SK-N-SH (cell line): ENCODE measurements at regions of chr7 and their contacts with region 1.

Region 1: GRCh38 chr7:100407285-100408180 is 21.0 kb downstream of the ZCWPW1 start:
- DNase-seq: peak; percentile 75
- H3K4me3 ChIP-seq: no peak overlapping the region
- H3K27ac ChIP-seq: no peak overlapping the region
- H3K4me1 ChIP-seq: no peaks in the 10 kb centered on the region
- H3K27me3 ChIP-seq: no peaks in the 10 kb centered on the region
- CTCF ChIP-seq: peak; percentile 90
- EP300 ChIP-seq: no peak
- RAD21 ChIP-seq: peak; percentile 81

Region 2: DNA sequence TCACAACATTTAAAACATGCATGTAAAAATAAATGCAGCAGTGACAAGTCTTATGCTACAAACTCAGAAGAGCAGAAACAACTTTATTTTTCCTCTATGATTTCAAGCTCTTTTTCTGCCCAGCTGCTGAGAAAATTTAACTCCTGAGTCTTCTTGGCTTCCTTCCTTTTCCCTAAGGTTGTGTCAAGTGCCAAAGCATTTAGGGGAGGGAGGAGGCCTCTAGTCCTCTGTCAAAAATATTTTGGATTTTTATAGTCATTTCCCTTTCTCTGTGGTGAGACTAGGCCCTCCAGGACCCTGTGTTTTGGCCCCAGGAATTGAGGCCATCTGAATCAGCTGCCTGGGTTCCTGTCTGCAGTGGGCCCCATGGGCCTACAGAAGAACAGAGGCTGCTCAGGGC is 60.6 kb before region 1 on chr7:
- CTCF ChIA-PET with region 1: interaction called, 11 read pairs
- POLR2A ChIA-PET with region 1: no interaction called
- DNase-seq: no peak
- H3K4me3 ChIP-seq: no peak overlapping the region
- H3K27ac ChIP-seq: no peak overlapping the region
- H3K4me1 ChIP-seq: peaks cover 0 to 6% of the 10 kb centered on the region in 2 experiments; a peak in 2 of 4 replicates
- H3K27me3 ChIP-seq: no peaks in the 10 kb centered on the region
- CTCF ChIP-seq: no peak
- EP300 ChIP-seq: no peak
- RAD21 ChIP-seq: no peak

Region 3: DNA sequence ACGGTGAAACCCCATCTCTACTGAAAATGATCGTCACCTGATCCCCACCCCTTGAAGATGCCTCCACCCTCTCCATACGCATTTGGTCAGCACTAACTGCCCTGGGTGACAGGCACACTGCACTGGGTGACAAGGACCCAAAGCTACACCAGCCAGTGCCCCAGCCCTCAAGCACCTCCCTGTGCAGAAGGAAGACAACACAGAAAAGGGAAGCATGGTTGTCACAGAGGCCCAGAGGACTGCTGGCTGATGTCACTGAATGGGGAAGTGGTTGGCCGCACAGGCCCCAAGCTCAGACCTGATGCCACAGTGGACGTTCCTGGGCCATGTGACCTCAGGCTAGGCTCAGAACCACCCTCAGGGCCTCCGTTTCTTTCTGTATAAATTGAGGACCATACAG is 38.4 kb before region 1 on chr7:
- CTCF ChIA-PET with region 1: interaction called, 68 read pairs
- POLR2A ChIA-PET with region 1: no interaction called
- DNase-seq: no peak
- H3K4me3 ChIP-seq: no peak overlapping the region
- H3K27ac ChIP-seq: no peak overlapping the region
- H3K4me1 ChIP-seq: peaks cover 5 to 7% of the 10 kb centered on the region in 2 experiments; a peak in 1 of 4 replicates
- H3K27me3 ChIP-seq: no peaks in the 10 kb centered on the region
- CTCF ChIP-seq: no peak
- EP300 ChIP-seq: no peak
- RAD21 ChIP-seq: no peak

Region 4: DNA sequence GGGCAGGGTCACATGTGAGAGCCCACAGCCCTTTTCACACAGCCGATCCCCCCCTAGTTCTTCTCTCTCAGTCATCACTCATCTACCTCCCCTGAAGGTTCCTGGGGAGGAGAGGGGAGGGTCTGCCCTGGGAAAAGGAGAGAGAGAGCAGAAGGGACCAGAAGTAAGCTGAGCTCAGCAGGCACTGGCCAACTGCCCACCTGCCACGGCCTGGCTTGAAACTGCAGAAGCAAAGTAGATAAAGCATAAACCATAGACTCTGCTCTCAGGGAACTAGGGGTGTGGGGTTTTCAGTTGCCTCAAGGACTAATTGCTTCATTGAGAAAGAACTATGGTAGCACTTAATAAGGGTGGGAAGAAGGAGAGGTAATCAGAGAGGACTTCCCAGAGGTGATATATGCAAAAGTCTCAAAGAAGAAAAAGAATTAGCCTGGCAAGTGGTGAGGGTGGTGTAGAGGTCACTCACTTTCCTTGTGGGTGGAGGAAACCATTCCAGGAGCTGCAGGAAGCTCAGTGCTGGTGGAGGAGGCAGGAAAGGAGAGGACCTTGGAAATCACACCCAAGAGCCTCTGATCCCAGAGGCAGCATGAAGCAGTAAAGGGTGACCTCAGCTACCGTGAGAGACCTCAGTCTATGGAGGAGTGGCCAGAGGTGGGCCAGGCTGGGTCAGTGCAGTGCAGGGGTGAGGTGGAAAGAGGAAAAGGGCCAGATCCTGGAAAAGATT is 17.1 kb before region 1 on chr7:
- CTCF ChIA-PET with region 1: interaction called, 68 read pairs
- POLR2A ChIA-PET with region 1: no interaction called
- DNase-seq: no peak
- H3K4me3 ChIP-seq: no peak overlapping the region
- H3K27ac ChIP-seq: no peak overlapping the region
- H3K4me1 ChIP-seq: peaks cover 0 to 3% of the 10 kb centered on the region in 2 experiments; a peak in 1 of 4 replicates
- H3K27me3 ChIP-seq: no peaks in the 10 kb centered on the region; the same call in 1 of the 2 replicates
- CTCF ChIP-seq: no peak
- EP300 ChIP-seq: no peak
- RAD21 ChIP-seq: no peak

Region 5: DNA sequence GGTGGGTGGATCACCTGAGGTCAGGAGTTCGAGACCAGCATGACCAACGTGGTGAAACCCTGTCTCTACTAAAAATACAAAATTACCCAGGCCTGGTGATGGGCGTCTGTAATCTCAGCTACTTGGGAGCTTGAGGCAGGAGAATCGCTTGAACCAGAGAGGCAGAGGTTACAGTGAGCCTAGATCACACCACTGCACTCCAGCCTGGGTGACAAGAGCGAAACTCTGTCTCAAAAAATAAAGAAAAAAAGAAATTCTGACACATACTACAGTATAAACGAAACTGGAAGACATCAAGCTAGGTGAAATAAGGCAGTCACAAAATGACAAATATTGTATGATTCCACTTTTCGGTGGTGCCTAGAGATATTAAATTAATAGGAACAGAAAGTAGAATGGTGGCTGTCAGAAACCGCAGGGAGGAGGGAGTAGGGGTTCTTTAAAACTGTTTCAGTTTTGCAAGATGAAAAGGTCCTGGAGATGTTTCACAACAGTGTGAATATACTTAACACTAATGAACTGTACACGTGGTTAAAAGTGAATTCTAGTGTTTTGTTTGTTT is 11.0 kb before region 1 on chr7:
- CTCF ChIA-PET with region 1: interaction called, 39 read pairs
- POLR2A ChIA-PET with region 1: no interaction called
- DNase-seq: no peak
- H3K4me3 ChIP-seq: no peak overlapping the region
- H3K27ac ChIP-seq: no peak overlapping the region
- H3K4me1 ChIP-seq: no peaks in the 10 kb centered on the region
- H3K27me3 ChIP-seq: no peaks in the 10 kb centered on the region; the same call in 1 of the 2 replicates
- CTCF ChIP-seq: no peak
- EP300 ChIP-seq: no peak
- RAD21 ChIP-seq: no peak

Region 6: DNA sequence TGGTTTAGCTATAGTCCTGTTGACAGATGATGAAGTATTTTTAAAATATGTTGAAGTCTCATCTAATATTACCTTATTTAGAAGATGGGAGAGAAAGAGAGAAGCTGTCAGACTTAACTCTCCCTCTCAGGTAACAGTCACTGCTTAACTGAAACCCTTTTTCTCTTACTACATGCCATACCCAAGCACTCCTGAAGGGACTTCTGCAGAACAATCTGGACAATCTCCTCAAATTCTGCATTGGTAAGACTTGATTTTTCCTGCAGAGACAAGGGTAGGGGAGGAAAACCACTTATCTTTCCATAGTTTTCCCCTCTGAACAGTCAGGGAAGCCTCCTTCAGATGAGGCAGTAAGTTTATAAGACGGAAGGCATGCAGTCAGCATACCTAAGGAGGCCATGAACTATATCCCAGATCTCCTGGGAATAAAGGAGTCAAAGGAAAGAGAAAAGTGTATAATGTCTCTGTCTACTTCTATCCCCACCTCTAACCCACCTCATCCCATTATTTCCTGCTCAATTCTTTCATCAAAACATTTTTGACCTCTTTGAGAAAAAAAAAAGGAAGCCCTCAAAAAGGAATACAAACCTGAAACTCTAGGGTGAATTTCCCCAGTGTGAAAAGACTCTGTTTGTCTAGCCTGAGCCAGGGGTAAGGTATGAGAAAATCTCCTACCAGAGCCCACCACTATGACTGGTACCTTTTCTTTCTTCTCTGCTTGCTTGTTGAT is 11.6 kb after region 1 on chr7:
- CTCF ChIA-PET with region 1: interaction called, 34 read pairs
- POLR2A ChIA-PET with region 1: no interaction called
- DNase-seq: no peak
- H3K4me3 ChIP-seq: no peak overlapping the region
- H3K27ac ChIP-seq: no peak overlapping the region
- H3K4me1 ChIP-seq: no peaks in the 10 kb centered on the region
- H3K27me3 ChIP-seq: no peaks in the 10 kb centered on the region
- CTCF ChIP-seq: no peak
- EP300 ChIP-seq: no peak
- RAD21 ChIP-seq: no peak

Region 7: GRCh38 chr7:100428199-100428966 is 20.9 kb after region 1 on chr7 and contains the start of gene ZCWPW1:
- CTCF ChIA-PET with region 1: interaction called, 23 read pairs
- POLR2A ChIA-PET with region 1: interaction called, 6 read pairs
- DNase-seq: peak; percentile 94
- H3K4me3 ChIP-seq: peak within 1 kb of the TSS; percentile 78 to 95
- H3K27ac ChIP-seq: peak within 1 kb of the TSS; percentile 99 to 100
- H3K4me1 ChIP-seq: peaks cover 17 to 33% of the 10 kb centered on the region in 2 experiments; a peak in 3 of 4 replicates
- H3K27me3 ChIP-seq: no peaks in the 10 kb centered on the region
- CTCF ChIP-seq: no peak
- EP300 ChIP-seq: no peak
- RAD21 ChIP-seq: no peak
- polyA plus RNA-seq, gene ZCWPW1: 3.4 and 4.1 TPM in 2 replicates

Region 8: DNA sequence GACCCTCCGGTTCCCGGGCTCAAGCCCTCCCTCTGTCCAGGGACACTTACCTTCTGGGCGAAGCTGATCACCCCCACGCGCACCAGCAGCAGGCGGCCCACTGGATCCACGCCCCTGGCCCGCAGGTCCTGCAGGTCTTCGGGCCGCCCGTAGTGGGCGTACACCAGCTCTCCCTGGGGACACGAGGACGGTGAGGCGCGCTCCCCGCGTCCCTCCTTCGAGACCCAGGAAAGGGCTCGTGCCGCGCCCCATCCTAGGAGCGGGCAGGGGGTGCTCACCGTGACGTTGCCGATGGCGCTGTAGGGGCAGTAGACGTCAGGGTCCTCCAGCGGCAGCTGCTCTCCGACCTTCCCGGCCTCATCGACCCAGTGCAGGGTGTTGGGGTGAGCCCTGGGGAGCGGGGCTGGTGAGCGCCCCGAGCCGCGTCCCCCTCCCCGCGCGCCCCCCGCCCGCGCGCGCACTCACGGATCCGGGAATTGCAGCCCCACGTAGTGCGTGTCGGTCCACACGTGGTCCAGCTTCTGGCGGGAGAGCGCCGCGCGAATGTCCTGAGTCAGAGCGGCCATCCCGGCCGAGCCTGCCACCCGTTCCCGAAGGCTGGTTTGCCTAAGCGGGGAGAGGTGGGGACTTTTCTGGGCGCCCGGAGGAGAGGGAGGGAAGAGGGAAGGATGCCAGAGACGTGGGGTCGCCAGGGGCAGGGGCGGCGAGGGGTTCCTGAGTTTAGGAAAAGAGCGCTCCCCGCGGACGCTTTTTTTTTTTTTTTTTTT is 225.6 kb after region 1 on chr7:
- CTCF ChIA-PET with region 1: no interaction called
- POLR2A ChIA-PET with region 1: no interaction called
- DNase-seq: peak; percentile 95
- H3K4me3 ChIP-seq: peak overlapping the region; percentile 43 to 59
- H3K27ac ChIP-seq: no peak overlapping the region
- H3K4me1 ChIP-seq: peaks cover 6% of the 10 kb centered on the region in 2 experiments; a peak in 1 of 4 replicates
- H3K27me3 ChIP-seq: no peaks in the 10 kb centered on the region
- CTCF ChIP-seq: peak; percentile 53
- EP300 ChIP-seq: no peak
- RAD21 ChIP-seq: peak; percentile 46